Naive thymus-derived CD4-positive, alpha-beta T cell (primary cell): ENCODE measurements at regions of chr14 and their contacts with region 1.

Region 1: GRCh38 chr14:22886500-22887259 is 3.7 kb downstream of the REM2 start:
- DNase-seq: peak; percentile 42 to 75 (median 69)
- ATAC-seq: peak; percentile 80
- H3K4me3 ChIP-seq: peak overlapping the region; percentile 77
- H3K4me3 Mint-ChIP-seq: peak overlapping the region; percentile 88 to 100 (median 92)
- H3K27ac ChIP-seq: peak overlapping the region; percentile 75
- H3K27ac Mint-ChIP-seq: peak overlapping the region; percentile 85 to 98 (median 96)
- H3K4me1 ChIP-seq: peaks cover 21 to 53% of the 10 kb centered on the region in 2 donors
- H3K4me1 Mint-ChIP-seq: peaks cover 39 to 80% (median 72%) of the 10 kb centered on the region in 7 donors
- H3K27me3 ChIP-seq: no peaks in the 10 kb centered on the region
- H3K27me3 Mint-ChIP-seq: peaks cover 0 to 21% (median 0%) of the 10 kb centered on the region in 5 donors

Region 2: DNA sequence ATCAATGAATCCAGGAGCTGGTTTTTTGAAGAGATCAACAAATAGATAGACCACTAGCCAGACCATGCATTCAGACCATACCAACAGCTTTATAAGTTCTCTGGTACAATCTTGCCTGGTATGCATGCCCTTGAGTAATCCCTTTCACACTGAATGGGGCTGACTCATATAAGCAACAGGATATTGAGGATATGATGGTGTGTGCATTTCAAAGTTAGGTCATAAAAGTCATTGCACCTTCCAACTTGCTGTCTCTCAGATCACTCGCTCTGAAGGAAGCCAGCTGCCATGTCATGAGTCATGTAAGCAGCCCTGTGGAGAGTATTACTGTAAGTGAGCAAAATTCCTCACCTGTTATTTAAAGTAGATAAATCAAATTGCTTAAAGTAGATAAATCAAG is 197.5 kb before region 1 on chr14:
- CTCF ChIA-PET with region 1: no interaction called
- POLR2A ChIA-PET with region 1: no interaction called
- intact Hi-C with region 1: no loop called
- DNase-seq: no peak
- ATAC-seq: peak; percentile 52
- H3K4me3 ChIP-seq: no peak overlapping the region
- H3K4me3 Mint-ChIP-seq: no peak overlapping the region
- H3K27ac ChIP-seq: no peak overlapping the region
- H3K27ac Mint-ChIP-seq: no peak overlapping the region
- H3K4me1 ChIP-seq: no peaks in the 10 kb centered on the region
- H3K4me1 Mint-ChIP-seq: peaks cover 0 to 5% (median 0%) of the 10 kb centered on the region in 7 donors
- H3K27me3 ChIP-seq: no peaks in the 10 kb centered on the region
- H3K27me3 Mint-ChIP-seq: peaks cover 16 to 56% (median 39%) of the 10 kb centered on the region in 5 donors

Region 3: GRCh38 chr14:22829661-22830442 is 56.8 kb before region 1 on chr14 and contains the start of gene MRPL52:
- CTCF ChIA-PET with region 1: no interaction called
- POLR2A ChIA-PET with region 1: interaction called, 6 read pairs
- intact Hi-C with region 1: loop called in 1 of 2 experiments (anchors 5 kb)
- DNase-seq: peak; percentile 71 to 90 (median 88)
- ATAC-seq: peak; percentile 97
- H3K4me3 ChIP-seq: peak within 1 kb of the TSS; percentile 99
- H3K4me3 Mint-ChIP-seq: peak within 1 kb of the TSS; percentile 74 to 94 (median 91)
- H3K27ac ChIP-seq: peak within 1 kb of the TSS; percentile 95
- H3K27ac Mint-ChIP-seq: peak within 1 kb of the TSS; percentile 91 to 99 (median 97)
- H3K4me1 ChIP-seq: peaks cover 11 to 21% of the 10 kb centered on the region in 2 donors
- H3K4me1 Mint-ChIP-seq: peaks cover 11 to 39% (median 32%) of the 10 kb centered on the region in 7 donors
- H3K27me3 ChIP-seq: no peaks in the 10 kb centered on the region
- H3K27me3 Mint-ChIP-seq: peaks cover 0 to 2% (median 0%) of the 10 kb centered on the region in 5 donors
- total RNA-seq, gene MRPL52: 32.9 to 118 (median 48.2) TPM